ENCODE measurements at regions of chr10 and their contacts with region 1.

Region 1: GRCh38 chr10:101012525-101013364 is 13.1 kb downstream of the LZTS2 start:
- DNase-seq: peak; percentile 84
- H3K4me3 ChIP-seq: no peak overlapping the region
- H3K27ac ChIP-seq: peak overlapping the region in 1 of 2 donors; percentile 12
- H3K4me1 ChIP-seq: no peaks in the 10 kb centered on the region
- H3K27me3 ChIP-seq: no peaks in the 10 kb centered on the region
- CTCF ChIP-seq: peak; percentile 69 to 96 (median 84)
- POLR2A ChIP-seq: no peak

Region 2: DNA sequence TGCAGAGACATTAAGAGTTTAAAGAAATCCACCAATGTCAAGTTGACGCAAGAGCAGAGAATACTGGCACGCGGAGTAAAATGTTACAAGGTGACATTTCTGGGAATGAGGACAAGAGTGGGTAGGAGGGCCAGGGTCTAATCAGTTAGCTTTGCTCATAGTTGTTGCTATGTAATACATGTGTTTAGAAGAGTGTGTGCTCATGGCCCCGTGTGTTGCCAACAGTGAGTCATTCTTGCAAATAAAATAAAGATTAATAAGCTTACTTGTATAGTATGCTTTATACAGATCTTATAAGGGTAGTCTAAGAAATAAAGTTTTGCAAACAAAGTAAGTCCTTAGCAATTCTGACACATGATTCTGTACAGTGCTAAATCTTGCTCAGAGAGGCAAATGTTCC is 1067.5 kb before region 1 on chr10:
- intact Hi-C with region 1: no loop called
- DNase-seq: peak; percentile 47
- H3K4me3 ChIP-seq: no peak overlapping the region
- H3K27ac ChIP-seq: peak overlapping the region in 1 of 2 donors; percentile 8
- H3K4me1 ChIP-seq: no peaks in the 10 kb centered on the region
- H3K27me3 ChIP-seq: no peaks in the 10 kb centered on the region
- CTCF ChIP-seq: no peak
- POLR2A ChIP-seq: no peak

Region 3: DNA sequence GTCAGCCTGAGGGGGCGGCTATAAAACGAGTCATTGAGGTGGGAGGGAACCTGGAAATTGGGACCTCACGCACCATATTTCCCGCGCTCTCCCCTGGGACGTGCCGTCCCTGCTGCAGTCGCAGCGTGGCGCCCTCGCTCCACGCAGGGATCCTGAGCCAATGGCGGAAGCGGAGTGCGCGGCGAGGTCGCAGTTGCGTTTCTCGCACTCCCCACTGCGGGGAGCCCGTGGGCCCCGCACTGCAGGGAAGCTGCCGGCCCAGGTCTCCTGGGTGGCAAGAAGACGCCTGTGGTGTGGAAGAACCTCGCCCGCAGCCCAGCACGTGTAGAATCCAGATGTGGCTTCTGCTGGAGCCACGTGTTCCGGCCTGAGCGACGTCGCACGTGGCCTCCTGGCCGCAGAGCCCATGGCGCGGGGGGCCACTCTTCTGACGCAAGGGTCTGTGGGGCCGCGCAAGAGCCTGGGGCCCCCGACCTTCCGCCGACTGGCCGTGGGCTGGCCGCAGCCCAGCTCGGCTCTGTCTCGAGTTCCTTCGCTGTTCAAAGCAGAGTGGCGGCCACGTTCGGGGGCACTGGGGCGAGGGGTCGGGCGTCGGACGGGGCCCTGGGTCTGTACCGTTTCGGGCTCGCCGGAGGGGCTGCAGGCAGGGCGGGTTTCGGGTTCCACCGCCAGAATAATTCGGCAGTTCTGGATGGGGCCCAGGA is 450.6 kb before region 1 on chr10:
- intact Hi-C with region 1: loop called (anchors 10 kb)
- DNase-seq: peak; percentile 47
- H3K4me3 ChIP-seq: no peak overlapping the region
- H3K27ac ChIP-seq: no peak overlapping the region
- H3K4me1 ChIP-seq: no peaks in the 10 kb centered on the region
- H3K27me3 ChIP-seq: peaks cover 6% of the 10 kb centered on the region
- CTCF ChIP-seq: peak; percentile 17 to 93 (median 76)
- POLR2A ChIP-seq: no peak

Region 4: DNA sequence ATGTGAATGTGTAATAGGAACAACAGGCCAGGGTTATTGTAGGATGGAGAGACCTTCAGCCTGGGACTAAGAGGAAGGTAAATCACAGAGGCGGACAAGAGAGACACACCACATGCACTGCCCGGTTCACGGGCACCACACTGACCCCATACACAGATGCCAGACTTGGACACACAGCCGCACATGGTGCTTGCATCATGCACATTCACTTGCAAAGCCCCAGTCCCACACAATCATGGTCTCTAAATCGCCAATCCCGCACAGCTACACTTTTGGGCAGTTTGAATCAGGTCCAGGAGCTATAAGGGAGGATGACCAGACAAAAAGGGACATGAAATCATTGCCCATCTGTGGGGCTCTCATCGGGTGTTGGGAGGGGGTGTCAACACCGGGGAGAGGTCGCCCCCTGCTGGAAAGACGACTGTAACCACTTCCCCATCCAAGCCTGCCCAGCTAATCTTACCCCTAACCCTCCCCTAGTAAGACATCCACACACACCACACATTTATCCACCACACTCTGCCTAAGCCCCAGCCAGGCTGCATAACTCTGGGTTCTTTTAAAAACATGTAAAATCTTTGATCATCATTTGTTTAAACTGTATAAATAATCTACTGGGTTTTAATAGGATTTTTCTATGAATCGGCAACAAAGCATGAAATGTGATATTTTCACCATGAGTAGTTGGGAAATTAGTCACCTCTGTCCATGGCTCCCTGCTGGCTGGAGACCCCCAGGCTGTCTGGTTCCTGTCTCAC is 140.5 kb before region 1 on chr10:
- intact Hi-C with region 1: no loop called
- DNase-seq: no peak
- H3K4me3 ChIP-seq: no peak overlapping the region
- H3K27ac ChIP-seq: no peak overlapping the region
- H3K4me1 ChIP-seq: no peaks in the 10 kb centered on the region
- H3K27me3 ChIP-seq: peaks cover 4% of the 10 kb centered on the region
- CTCF ChIP-seq: peak in 3 of 4 experiments; percentile 16 to 44 (median 25)
- POLR2A ChIP-seq: no peak

Region 5: GRCh38 chr10:100993986-100994708 is 18.6 kb before region 1 on chr10:
- intact Hi-C with region 1: loop called (anchors 1 kb)
- DNase-seq: no peak
- H3K4me3 ChIP-seq: no peak overlapping the region
- H3K27ac ChIP-seq: no peak overlapping the region
- H3K4me1 ChIP-seq: peaks cover 8% of the 10 kb centered on the region
- H3K27me3 ChIP-seq: no peaks in the 10 kb centered on the region
- CTCF ChIP-seq: peak; percentile 32 to 80 (median 66)
- POLR2A ChIP-seq: no peak

Region 6: DNA sequence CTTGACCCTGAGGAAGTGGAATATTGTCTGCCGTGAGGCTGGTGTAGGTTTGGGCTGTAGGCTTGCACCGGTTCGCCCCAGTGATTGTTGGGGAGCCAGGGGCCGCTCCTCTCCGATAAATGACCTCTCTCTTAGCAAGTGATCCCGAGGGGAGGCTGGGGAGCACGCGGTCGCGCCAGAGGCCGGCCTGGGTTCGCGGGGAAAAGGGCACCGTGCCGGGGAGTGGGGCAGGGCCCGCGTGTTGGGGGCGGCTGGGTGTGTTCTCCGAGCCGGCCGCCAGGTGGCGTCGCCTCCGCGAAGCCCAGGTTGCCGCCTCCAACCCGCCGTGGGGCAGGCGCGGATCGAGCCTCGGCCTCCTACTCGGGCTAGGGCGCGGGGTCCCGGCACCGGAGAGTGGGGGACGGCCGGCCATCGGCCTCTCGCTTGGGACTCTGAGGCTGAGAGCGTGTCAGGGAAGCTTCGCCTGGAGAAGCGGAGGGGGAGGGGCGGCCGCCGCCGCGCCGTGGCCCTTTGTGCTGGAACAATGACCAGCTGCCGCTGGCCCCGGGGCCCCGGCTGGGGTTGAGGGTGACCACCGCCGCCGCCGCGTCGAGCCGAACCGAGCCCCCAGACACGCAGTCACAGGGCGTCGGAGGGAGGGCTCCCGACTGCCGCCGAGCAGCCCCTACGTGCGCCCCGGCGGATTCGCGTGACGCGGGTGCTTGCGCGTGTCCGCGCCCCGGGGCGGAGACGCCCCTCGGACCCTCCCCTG is 13.6 kb before region 1 on chr10:
- intact Hi-C with region 1: loop called (anchors 1 kb)
- DNase-seq: peak; percentile 72
- H3K4me3 ChIP-seq: peak overlapping the region; percentile 64 to 91
- H3K27ac ChIP-seq: peak overlapping the region; percentile 99 to 100
- H3K4me1 ChIP-seq: peaks cover 23% of the 10 kb centered on the region
- H3K27me3 ChIP-seq: no peaks in the 10 kb centered on the region
- CTCF ChIP-seq: peak; percentile 98 to 99 (median 98)
- POLR2A ChIP-seq: peak; percentile 96